Heart left ventricle (tissue), 16 donors: ENCODE measurements at regions of chr6 and their contacts with region 1.

Region 1: GRCh38 chr6:138115877-138116660 is 8.8 kb upstream of the PERP start:
- DNase-seq: peak; percentile 24 to 63 (median 50)
- ATAC-seq: peak; percentile 63 to 88 (median 85)
- H3K4me3 ChIP-seq: no peak overlapping the region
- H3K27ac ChIP-seq: no peak overlapping the region
- H3K4me1 ChIP-seq: peaks cover 0 to 6% (median 0%) of the 10 kb centered on the region in 12 donors
- H3K27me3 ChIP-seq: peaks cover 0 to 10% (median 0%) of the 10 kb centered on the region in 9 donors
- CTCF ChIP-seq: peak; percentile 66 to 85 (median 74)
- POLR2A ChIP-seq: no peak

Region 2: DNA sequence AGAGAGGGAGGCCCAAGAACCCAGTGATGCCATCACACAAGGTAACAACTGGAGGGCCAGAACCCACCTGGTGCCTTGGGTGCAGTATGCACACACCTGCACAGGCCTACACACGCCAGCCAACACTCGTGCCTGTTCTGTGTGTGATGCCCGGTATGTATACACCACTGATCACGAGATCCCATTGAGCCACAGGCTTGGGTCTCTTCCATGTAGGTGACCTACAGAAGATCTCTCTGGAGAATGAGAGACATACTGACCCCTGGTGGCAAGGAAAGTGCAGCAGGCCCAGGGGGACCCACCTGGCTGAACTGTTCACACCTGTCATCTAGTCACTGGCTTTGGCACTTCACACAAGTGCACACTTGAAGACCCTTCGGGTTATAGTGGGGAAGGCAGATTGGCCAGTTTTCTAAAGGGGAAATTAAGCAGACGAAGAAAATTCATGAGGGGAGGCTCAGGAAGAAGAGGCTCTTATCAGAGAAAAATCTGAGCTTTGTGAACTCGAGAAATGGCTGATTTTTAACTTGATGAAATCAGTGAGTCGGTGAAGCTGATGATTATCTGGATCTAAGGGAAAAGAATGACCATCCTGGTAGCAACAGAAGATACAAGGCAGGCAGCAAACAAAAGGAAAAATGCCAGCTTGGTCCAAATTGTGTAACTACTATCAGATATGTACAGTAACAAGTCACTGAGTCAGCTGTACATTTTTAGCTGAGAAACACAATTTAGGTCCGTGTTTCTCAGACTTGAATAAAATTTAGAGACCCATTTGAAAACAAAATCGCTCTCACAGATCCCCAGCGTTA is 171.3 kb after region 1 on chr6:
- intact Hi-C with region 1: loop called in 3 of 10 experiments (anchors 2 to 5 kb)
- DNase-seq: no peak
- ATAC-seq: peak in 3 of 4 donors; percentile 23 to 41 (median 37)
- H3K4me3 ChIP-seq: no peak overlapping the region
- H3K27ac ChIP-seq: no peak overlapping the region
- H3K4me1 ChIP-seq: no peaks in the 10 kb centered on the region
- H3K27me3 ChIP-seq: no peaks in the 10 kb centered on the region
- CTCF ChIP-seq: peak; percentile 37 to 61 (median 44)
- POLR2A ChIP-seq: no peak

Region 3: DNA sequence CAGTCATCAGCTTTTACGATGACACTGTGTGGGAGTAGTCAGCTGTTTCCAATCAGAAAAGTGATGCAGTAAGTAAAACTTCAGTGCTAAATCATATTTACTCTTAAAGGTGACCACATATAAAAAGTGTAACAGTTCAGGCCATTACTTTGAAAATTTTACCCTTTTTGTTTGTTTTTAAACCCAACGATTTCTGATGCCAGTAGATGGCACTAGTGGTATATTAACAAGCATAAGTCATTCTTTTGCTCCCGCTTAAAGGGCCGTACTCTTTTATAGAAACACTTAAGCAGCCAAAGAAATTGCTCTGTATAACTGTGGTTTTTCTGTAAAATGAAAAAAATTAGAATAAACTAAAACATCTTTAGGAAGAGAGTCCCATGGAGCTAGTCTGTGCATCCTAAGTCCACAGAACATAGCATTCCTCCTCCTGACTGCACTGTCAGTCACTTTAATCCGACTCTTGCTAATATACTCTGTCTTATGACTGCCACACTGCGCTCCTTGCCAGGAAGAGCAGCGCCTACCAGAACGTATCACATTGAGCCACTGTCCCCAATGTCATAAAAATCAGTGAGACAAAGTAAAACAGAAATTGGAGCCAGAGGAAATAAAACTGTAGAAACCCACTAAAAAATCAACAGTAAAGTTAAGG is 313.0 kb after region 1 on chr6:
- intact Hi-C with region 1: loop called in 2 of 10 experiments (anchors 5 to 10 kb)
- DNase-seq: no peak
- ATAC-seq: peak in 3 of 4 donors; percentile 8 to 43 (median 33)
- H3K4me3 ChIP-seq: peak overlapping the region in 4 of 12 donors; percentile 10 to 24 (median 12)
- H3K27ac ChIP-seq: peak overlapping the region in 11 of 12 donors; percentile 31 to 85 (median 64)
- H3K4me1 ChIP-seq: peaks cover 0 to 51% (median 20%) of the 10 kb centered on the region in 12 donors
- H3K27me3 ChIP-seq: no peaks in the 10 kb centered on the region
- CTCF ChIP-seq: peak; percentile 42 to 77 (median 65)
- POLR2A ChIP-seq: no peak

Region 4: DNA sequence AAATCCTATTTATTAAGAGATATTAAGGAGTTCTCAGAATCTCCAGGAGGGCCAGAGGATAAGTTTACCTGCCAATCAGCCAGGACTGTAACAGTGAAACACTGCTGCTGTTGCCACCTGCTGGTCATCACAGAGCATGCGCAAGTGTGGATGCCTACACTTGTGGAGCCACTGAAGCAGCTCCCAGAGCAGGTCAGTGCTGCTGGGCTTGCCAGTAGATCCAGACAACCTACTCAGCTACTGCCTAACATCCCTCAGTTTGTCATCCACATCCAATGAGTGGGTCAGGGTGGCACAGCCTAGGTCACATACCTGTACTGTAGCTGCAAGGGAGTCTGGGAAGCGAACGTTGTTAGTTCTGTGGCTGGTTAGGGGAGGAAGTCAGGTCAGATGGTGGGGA is 401.6 kb after region 1 on chr6:
- intact Hi-C with region 1: loop called in 7 of 10 experiments (anchors 5 to 10 kb)
- DNase-seq: peak in 2 of 5 donors; percentile 19 to 26
- ATAC-seq: peak in 3 of 4 donors; percentile 37 to 67 (median 51)
- H3K4me3 ChIP-seq: no peak overlapping the region
- H3K27ac ChIP-seq: no peak overlapping the region
- H3K4me1 ChIP-seq: peaks cover 0 to 44% (median 16%) of the 10 kb centered on the region in 12 donors
- H3K27me3 ChIP-seq: no peaks in the 10 kb centered on the region
- CTCF ChIP-seq: peak; percentile 25 to 64 (median 50)
- POLR2A ChIP-seq: no peak

Region 5: DNA sequence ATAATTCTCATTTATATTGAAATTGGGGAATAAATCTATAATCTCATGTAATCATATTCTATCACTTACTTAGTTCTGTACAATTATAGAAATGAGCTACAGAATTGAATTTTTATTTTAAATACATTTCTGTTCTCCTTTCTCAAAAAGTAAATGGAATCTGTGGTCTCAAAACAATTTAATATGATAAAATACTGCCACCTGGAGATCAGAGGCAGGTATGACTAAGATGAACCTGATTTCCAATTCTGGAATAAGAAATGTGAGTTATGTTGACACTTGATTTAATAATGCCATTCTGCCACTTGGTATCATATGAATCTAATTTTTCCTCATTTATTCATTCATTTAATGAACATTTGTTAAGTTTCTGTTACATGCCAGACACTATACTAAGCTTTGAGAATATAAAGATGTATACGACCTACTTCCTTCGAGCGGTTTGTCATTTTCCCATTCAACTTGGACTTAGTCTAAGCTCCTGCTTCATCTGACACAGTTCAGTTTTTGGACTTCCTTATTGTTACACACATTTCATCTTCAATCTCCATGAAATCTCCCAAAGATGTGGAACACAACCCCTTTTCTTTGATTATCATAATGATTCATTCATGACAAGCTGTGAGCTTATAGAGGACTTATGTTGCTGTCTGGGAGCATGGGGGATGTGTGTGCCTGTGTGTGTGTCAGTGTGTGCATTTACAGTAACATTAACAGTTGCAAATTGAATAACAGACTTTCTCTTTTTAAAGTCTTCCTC is 650.0 kb after region 1 on chr6:
- intact Hi-C with region 1: loop called (anchors 2 to 5 kb)
- DNase-seq: no peak
- ATAC-seq: no peak
- H3K4me3 ChIP-seq: no peak overlapping the region
- H3K27ac ChIP-seq: no peak overlapping the region
- H3K4me1 ChIP-seq: no peaks in the 10 kb centered on the region
- H3K27me3 ChIP-seq: no peaks in the 10 kb centered on the region
- CTCF ChIP-seq: peak; percentile 61 to 80 (median 74)
- POLR2A ChIP-seq: no peak